Left cardiac atrium (tissue), 4 donors: ENCODE measurements at regions of chr3 and their contacts with region 1.

Region 1: GRCh38 chr3:134299185-134299887 is 48.7 kb upstream of the RYK start:
- DNase-seq: no peak
- ATAC-seq: peak; percentile 85 to 86

Region 2: GRCh38 chr3:134197681-134198261 is 101.6 kb before region 1 on chr3:
- intact Hi-C with region 1: loop called in 1 of 2 experiments (anchors 5 kb)
- DNase-seq: no peak
- ATAC-seq: peak; percentile 81 to 87

Region 3: GRCh38 chr3:134212906-134213665 is 86.2 kb before region 1 on chr3:
- intact Hi-C with region 1: loop called (anchors 1 to 5 kb)
- DNase-seq: peak; percentile 80
- ATAC-seq: peak; percentile 81 to 89